Activated CD4-positive, alpha-beta memory T cell treated with anti-CD3 and anti-CD28 coated beads, Interleukin-2, amount 10 ng/mL, durations not matched to agents 7 days and 5 days (primary cell): ENCODE measurements at regions of chr2 and their contacts with region 1.

Region 1: GRCh38 chr2:181223234-181223633 is 234.0 kb upstream of the ITGA4 start:
- DNase-seq: no peak
- H3K4me3 Mint-ChIP-seq: peak overlapping the region; percentile 62
- H3K27ac Mint-ChIP-seq: peak overlapping the region; percentile 97
- H3K4me1 Mint-ChIP-seq: peaks cover 51% of the 10 kb centered on the region
- H3K27me3 Mint-ChIP-seq: no peaks in the 10 kb centered on the region

Region 2: DNA sequence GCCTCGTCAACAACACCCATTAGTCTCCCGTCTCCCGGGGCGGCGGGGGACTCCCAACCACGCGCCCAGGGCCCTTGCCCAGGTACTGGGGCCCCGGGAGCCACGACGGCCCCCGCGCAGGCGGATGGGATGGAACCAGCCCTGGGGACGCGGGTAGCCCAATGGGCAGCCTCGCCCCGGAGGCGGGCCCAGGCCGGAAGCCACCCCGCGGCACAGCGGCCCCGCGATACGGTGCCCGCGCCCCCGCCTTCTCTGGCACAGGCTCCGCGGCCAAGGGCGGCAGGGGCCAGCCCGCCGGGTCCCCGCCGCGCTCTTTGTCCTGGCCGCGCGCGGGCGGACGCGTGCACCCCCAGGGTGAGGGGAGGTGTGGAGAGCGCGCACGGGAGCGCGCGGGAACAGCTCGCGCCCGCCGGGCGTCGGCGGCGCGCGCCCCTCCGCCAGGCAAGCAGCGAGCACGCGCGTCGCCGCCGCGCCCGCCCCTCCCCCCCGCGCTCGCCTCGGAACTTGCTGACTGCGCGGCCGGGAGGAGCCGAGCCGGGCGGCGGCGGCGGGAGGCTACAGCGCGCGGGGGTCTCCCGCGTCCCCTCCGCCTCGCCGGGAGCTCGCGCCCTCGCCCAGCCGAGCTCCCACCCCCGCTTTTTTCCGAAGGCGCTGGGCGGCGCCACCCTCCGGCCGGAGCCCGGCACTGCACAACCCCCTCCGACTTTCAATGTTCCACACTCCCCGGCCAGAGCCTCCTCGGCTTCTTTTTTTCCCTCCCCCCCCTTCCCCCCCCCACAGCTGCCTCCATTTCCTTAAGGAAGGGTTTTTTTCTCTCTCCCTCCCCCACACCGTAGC is 242.9 kb before region 1 on chr2 and contains the start of gene UBE2E3:
- CTCF ChIA-PET with region 1: no interaction called
- POLR2A ChIA-PET with region 1: no interaction called
- DNase-seq: peak; percentile 82
- H3K4me3 Mint-ChIP-seq: peak within 1 kb of the TSS; percentile 90
- H3K27ac Mint-ChIP-seq: peak within 1 kb of the TSS; percentile 89
- H3K4me1 Mint-ChIP-seq: peaks cover 41% of the 10 kb centered on the region
- H3K27me3 Mint-ChIP-seq: peaks cover 19% of the 10 kb centered on the region
- total RNA-seq, gene UBE2E3: 42.1 to 42.5 TPM

Region 3: GRCh38 chr2:181235683-181236459 is 12.6 kb after region 1 on chr2:
- CTCF ChIA-PET with region 1: interaction called, 4 read pairs
- POLR2A ChIA-PET with region 1: interaction called, 16 read pairs
- DNase-seq: peak; percentile 27
- H3K4me3 Mint-ChIP-seq: no peak overlapping the region
- H3K27ac Mint-ChIP-seq: peak overlapping the region; percentile 19
- H3K4me1 Mint-ChIP-seq: peaks cover 72% of the 10 kb centered on the region
- H3K27me3 Mint-ChIP-seq: no peaks in the 10 kb centered on the region